Panc1 (cell line): ENCODE measurements at regions of chrX and their contacts with region 1.

Region 1: DNA sequence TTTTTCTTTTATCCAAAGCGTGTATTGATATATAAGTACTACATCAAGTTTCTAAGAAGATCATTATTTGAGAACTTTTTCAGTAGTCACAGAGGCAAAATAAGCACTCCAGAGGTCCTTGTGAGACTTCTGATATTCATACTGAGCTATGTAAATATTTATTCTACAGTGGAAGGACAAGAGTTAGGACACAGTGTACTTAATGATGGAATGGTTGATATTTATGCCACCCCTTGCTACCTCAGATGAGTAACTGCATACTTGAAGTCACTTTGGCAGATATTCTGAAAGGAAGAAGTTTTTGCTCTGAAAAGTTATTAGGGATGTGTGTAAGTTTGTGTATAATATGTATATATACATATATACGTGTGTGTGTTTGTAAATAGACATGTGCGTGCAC is 30.3 kb downstream of the MAGEA1 start:
- DNase-seq: no peak
- ATAC-seq: no peak
- H3K4me3 ChIP-seq: no peak overlapping the region
- H3K27ac ChIP-seq: no peak overlapping the region
- H3K4me1 ChIP-seq: no peaks in the 10 kb centered on the region
- H3K27me3 ChIP-seq: peaks cover 47% of the 10 kb centered on the region
- CTCF ChIP-seq: no peak

Region 2: GRCh38 chrX:152444338-152444737 is 765.0 kb before region 1 on chrX:
- CTCF ChIA-PET with region 1: no interaction called
- POLR2A ChIA-PET with region 1: no interaction called
- in situ Hi-C with region 1: no loop called
- intact Hi-C with region 1: no loop called
- DNase-seq: no peak
- ATAC-seq: no peak
- H3K4me3 ChIP-seq: no peak overlapping the region
- H3K27ac ChIP-seq: no peak overlapping the region
- H3K4me1 ChIP-seq: no peaks in the 10 kb centered on the region
- H3K27me3 ChIP-seq: no peaks in the 10 kb centered on the region
- CTCF ChIP-seq: no peak

Region 3: GRCh38 chrX:152573866-152574265 is 635.5 kb before region 1 on chrX:
- CTCF ChIA-PET with region 1: no interaction called
- POLR2A ChIA-PET with region 1: interaction called, 17 read pairs
- in situ Hi-C with region 1: no loop called
- intact Hi-C with region 1: no loop called
- DNase-seq: no peak
- ATAC-seq: no peak
- H3K4me3 ChIP-seq: no peak overlapping the region
- H3K27ac ChIP-seq: no peak overlapping the region
- H3K4me1 ChIP-seq: no peaks in the 10 kb centered on the region
- H3K27me3 ChIP-seq: no peaks in the 10 kb centered on the region
- CTCF ChIP-seq: no peak

Region 4: DNA sequence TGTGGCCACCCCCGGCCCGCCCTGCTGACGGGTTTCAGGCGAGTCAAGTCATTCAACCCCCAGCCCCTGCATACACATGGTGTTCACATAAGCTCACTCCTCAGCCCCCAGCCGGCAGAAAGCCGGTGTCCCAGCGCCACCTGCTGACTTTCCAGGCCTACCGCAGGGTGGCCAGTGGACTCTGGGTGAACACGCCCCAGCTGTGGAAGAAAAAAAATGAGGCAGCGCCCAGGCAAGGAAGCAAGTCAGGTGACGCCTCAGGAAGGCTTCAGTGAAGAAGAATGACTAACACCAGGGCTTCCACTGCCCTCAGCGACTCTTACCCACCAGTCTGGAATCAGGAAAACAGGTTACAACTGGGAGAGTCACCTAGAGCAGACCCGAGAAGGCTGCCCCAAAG is 499.1 kb after region 1 on chrX:
- CTCF ChIA-PET with region 1: no interaction called
- POLR2A ChIA-PET with region 1: no interaction called
- in situ Hi-C with region 1: no loop called
- intact Hi-C with region 1: no loop called
- DNase-seq: no peak
- ATAC-seq: peak; percentile 79
- H3K4me3 ChIP-seq: no peak overlapping the region
- H3K27ac ChIP-seq: no peak overlapping the region
- H3K4me1 ChIP-seq: no peaks in the 10 kb centered on the region
- H3K27me3 ChIP-seq: no peaks in the 10 kb centered on the region
- CTCF ChIP-seq: peak; percentile 79